Mammary epithelial cell (primary cell): ENCODE measurements at regions of chr14 and their contacts with region 1.

Region 1: GRCh38 chr14:20855652-20856291 is 35.4 kb upstream of the RNASE3 start:
- DNase-seq: peak; percentile 62
- H3K4me3 ChIP-seq: no peak overlapping the region
- H3K27ac ChIP-seq: no peak overlapping the region
- H3K4me1 ChIP-seq: peaks cover 4% of the 10 kb centered on the region
- H3K27me3 ChIP-seq: peaks cover 2% of the 10 kb centered on the region
- CTCF ChIP-seq: peak; percentile 59 to 76

Region 2: GRCh38 chr14:19974844-19975243 is 880.9 kb before region 1 on chr14:
- CTCF ChIA-PET with region 1: no interaction called
- dilution Hi-C with region 1: no loop called
- in situ Hi-C with region 1: no loop called
- intact Hi-C with region 1: no loop called
- DNase-seq: no peak
- H3K4me3 ChIP-seq: no peak overlapping the region
- H3K27ac ChIP-seq: no peak overlapping the region
- H3K4me1 ChIP-seq: no peaks in the 10 kb centered on the region
- H3K27me3 ChIP-seq: no peaks in the 10 kb centered on the region
- CTCF ChIP-seq: no peak

Region 3: DNA sequence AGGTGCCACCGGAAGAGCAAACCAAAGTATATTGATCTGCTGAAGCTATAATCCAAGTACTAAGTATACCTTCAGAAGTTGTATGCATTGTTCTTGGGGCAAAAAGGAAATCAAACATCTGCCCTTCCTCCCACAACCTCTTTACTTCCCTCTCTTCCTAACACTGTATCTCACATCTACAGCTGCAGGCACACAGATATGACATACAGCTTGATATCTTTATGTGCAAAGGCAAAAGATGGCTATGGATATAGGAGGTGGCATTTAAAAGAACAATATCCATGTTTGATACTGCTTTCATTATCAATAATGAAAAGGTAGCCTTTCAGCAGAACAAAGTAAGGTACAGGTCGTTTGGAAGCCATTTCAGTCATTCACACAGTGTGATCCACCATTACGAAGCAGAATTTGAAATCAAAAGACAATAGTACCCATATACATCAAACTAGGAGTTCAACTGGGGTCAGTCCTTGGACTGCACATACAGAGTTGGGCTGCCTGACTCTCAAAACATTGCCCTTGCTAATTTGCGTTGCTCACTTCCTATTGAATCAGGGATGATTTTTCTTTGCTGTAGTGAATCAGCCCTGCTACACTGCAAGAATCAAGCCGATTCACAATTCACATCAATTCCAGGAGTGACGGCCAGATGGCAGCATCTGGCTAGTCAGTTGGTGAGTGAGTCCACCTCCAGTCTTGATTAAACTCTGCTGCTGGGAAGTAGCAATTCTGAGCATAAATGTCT is 158.3 kb before region 1 on chr14:
- CTCF ChIA-PET with region 1: no interaction called
- dilution Hi-C with region 1: no loop called
- in situ Hi-C with region 1: loop called (anchors 5 kb)
- intact Hi-C with region 1: loop called (anchors 1 kb)
- DNase-seq: peak; percentile 69
- H3K4me3 ChIP-seq: no peak overlapping the region
- H3K27ac ChIP-seq: no peak overlapping the region
- H3K4me1 ChIP-seq: no peaks in the 10 kb centered on the region
- H3K27me3 ChIP-seq: no peaks in the 10 kb centered on the region
- CTCF ChIP-seq: peak; percentile 76 to 81

Region 4: GRCh38 chr14:20836668-20837338 is 19.0 kb before region 1 on chr14:
- CTCF ChIA-PET with region 1: no interaction called
- dilution Hi-C with region 1: no loop called
- in situ Hi-C with region 1: no loop called
- intact Hi-C with region 1: loop called (anchors 1 kb)
- DNase-seq: peak; percentile 22
- H3K4me3 ChIP-seq: no peak overlapping the region
- H3K27ac ChIP-seq: no peak overlapping the region
- H3K4me1 ChIP-seq: no peaks in the 10 kb centered on the region
- H3K27me3 ChIP-seq: no peaks in the 10 kb centered on the region
- CTCF ChIP-seq: peak; percentile 45 to 66

Region 5: GRCh38 chr14:21103710-21104447 is 248.1 kb after region 1 on chr14:
- CTCF ChIA-PET with region 1: no interaction called
- dilution Hi-C with region 1: no loop called
- in situ Hi-C with region 1: loop called in 1 of 2 experiments (anchors 10 kb)
- intact Hi-C with region 1: loop called (anchors 1 kb)
- DNase-seq: peak; percentile 94
- H3K4me3 ChIP-seq: peak overlapping the region; percentile 32 to 85 (median 58)
- H3K27ac ChIP-seq: peak overlapping the region; percentile 86
- H3K4me1 ChIP-seq: peaks cover 62% of the 10 kb centered on the region
- H3K27me3 ChIP-seq: no peaks in the 10 kb centered on the region
- CTCF ChIP-seq: peak; percentile 73 to 86